Adrenal gland (tissue), 19 donors: ENCODE measurements at regions of chr15 and their contacts with region 1.

Region 1: DNA sequence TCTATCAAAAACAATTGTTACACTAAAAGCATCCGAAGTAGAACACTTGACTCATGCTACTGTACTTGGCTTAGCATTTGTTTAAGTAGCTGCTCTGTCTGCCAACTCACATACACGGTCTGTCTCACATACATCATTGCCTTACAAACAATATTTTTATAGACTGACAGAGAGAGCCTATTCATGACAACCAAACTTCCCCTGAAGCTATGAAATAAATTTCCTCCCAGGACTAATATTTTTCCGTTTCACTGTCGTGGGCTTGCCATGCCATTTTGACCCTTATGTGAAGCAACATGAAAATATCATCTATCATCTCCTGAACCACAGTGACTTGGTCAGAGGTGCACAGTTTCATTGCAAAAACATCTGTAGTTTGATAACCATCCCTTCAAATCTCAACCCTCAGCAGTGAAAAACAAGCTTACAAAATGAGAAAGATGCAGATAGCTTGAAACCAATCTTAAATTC is 66.5 kb upstream of the PYGO1 start:
- DNase-seq: no peak
- H3K4me3 ChIP-seq: no peak overlapping the region
- H3K27ac ChIP-seq: no peak overlapping the region
- H3K4me1 ChIP-seq: no peaks in the 10 kb centered on the region
- H3K27me3 ChIP-seq: no peaks in the 10 kb centered on the region
- CTCF ChIP-seq: no peak
- POLR2A ChIP-seq: no peak

Region 2: DNA sequence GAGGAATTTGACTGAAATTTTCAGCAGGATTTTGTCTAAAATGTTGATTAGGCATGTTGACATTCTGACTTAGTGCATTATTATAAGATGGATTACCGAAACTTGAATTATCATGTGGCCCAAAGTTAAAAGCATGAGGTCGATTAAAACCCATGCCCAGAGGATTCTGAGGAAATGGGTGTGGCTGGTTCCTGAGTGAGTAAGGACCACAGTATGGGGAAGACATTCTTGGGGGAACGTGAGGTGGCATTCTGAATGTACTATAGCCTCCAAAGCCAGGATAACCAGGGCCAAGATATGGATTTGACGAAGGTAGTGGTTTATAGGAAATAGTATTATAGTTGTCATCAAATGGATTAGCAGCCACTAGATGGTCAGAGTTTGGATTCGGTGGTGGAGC is 107.9 kb before region 1 on chr15:
- intact Hi-C with region 1: no loop called
- DNase-seq: no peak
- H3K4me3 ChIP-seq: no peak overlapping the region
- H3K27ac ChIP-seq: no peak overlapping the region
- H3K4me1 ChIP-seq: no peaks in the 10 kb centered on the region
- H3K27me3 ChIP-seq: no peaks in the 10 kb centered on the region
- CTCF ChIP-seq: no peak
- POLR2A ChIP-seq: no peak

Region 3: GRCh38 chr15:55846116-55846707 is 191.6 kb after region 1 on chr15:
- intact Hi-C with region 1: loop called in 1 of 2 experiments (anchors 5 kb)
- DNase-seq: peak; percentile 22 to 63 (median 59)
- H3K4me3 ChIP-seq: no peak overlapping the region
- H3K27ac ChIP-seq: no peak overlapping the region
- H3K4me1 ChIP-seq: no peaks in the 10 kb centered on the region
- H3K27me3 ChIP-seq: no peaks in the 10 kb centered on the region
- CTCF ChIP-seq: peak; percentile 56 to 91 (median 84)
- POLR2A ChIP-seq: no peak